ENCODE measurements at regions of chr1 and their contacts with region 1.

Region 1: GRCh38 chr1:44594871-44595746 is 79.2 kb downstream of the TMEM53 start:
- DNase-seq: peak; percentile 65 to 89
- ATAC-seq: peak; percentile 98

Region 2: GRCh38 chr1:44213222-44214112 is 381.6 kb before region 1 on chr1 and contains the start of gene DMAP1:
- intact Hi-C with region 1: loop called in 1 of 2 experiments (anchors 10 kb)
- DNase-seq: peak; percentile 76 to 86
- ATAC-seq: peak; percentile 91
- total RNA-seq, gene DMAP1: 39.0 to 44.4 TPM

Region 3: DNA sequence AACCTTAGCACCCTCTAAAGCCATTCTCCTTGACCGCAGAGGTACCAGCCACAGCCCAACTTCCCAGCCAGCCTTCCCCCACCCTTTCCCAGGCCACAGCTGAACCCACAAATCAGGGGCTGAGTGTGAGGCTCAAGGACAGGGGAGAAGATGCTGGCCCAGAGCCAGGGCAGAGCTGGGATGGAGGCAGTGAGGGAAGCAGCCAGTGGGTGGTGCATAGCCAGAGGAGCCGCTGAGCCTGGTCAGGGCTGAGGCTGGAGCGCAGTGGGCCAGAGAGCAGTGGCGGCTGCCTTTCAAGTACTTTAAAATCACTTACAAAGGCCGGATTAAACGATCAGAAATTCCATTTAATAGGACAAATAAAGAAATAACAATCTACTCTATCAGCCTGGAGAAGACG is 345.6 kb before region 1 on chr1:
- intact Hi-C with region 1: no loop called
- DNase-seq: no peak
- ATAC-seq: no peak

Region 4: DNA sequence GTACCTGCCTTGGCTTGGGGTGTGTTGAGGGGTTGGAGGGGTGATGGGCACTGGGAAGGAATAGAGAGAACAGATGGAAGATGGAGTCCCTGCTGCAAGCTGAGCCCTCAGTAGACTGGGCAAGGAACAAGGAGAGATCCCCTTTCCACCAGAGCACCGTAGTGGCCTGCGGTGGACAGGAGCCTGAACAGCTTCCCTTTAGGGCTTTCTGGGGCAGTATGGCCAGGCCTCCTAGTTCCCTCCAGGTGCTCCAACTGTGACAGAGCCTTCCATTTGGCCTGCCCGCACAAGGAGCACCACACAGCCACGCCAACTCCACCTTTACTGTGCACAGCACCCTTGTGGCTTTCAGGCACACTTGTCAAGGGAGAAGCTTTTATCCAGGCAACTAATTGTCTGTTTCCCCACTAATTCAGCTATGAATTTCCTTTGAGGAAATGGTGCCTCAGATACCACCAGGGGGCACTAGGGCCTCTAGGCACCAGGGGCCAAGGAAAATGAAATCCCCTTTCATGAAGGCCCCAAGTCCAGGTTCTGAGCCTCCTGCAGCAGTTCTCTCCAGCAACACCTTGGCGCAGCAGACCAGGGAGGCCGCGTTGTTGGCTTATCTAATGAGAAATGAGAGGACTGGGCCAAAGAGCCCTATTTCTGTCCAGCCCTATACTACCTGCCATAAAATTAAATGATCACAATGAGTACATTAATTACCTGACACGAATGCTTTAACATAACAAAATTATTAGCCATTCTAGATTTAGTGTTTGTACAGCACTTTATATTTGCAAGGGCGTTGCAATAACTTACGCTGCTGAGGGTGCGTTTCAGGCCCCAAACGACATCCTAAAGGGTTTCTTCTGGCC is 217.0 kb before region 1 on chr1:
- intact Hi-C with region 1: loop called in 1 of 2 experiments (anchors 5 kb)
- DNase-seq: peak in 1 of 2 donors; percentile 43
- ATAC-seq: no peak

Region 5: DNA sequence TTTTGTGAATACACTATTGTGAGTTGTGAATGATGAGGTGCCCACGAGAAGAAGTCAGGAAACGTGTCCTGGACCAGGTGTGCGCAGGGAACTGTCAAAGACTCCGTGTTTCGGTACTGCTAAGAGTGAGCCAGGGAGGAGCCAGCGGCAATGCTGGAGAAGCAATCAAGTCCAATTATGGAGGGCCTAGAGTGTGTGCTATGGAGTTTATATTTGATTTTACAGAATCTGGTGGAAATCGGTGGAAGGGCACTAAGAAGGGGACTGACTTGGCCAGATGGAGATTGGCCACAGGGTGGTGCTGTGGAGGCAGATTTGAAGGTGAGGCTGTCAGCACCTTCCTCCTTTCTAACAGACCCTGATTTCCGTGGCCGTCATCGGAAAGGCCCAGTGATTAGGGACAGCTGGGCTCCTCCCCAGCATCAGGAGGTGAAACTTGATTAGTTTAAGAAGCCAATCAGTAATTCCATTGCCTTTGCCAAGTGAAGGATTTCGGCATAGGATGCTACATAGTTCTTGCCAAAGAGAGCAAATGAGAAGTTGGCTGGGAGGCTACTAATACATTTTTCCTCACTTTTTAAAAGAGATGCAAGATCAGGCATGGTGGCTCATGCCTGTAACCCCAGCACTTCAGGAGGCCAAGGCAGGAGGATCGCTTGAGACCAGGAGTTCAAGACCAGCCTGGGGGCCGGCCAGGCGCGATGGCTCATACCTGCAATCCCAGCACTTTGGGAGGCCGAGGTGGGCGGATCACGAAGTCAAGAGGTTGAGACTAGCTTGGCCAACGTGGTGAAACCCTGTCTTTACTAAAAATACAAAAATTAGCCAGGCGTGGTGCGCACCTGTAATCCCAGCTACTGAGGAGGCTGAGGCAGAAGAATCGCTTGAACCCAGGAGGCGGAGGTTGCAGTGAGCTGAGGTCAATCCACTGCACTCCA is 240.9 kb after region 1 on chr1:
- intact Hi-C with region 1: no loop called
- DNase-seq: peak; percentile 82 to 94
- ATAC-seq: peak; percentile 90

Measured in left colon (tissue), 2 donors.